Thyroid gland (tissue), 4 donors: ENCODE measurements at regions of chr18 and their contacts with region 1.

Region 1: DNA sequence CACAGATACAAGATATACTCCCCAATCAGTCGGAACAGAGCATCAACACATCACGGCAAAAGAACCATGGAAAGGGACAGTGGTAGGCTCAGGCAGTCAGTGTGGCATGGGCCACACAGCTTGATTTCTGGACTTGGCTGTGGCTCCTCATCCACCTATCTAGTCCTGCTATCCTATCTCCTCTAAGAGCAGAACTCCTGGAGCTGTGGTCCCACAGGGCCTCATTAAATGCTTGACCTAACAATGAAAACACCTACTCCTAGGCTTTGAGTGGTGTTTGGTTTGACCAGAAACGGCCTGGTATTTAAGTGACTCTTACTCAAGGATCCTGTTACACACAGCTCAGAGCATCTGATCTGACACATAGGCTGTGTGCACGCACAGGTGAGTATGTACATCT is 33.6 kb upstream of the SMAD2 start:
- DNase-seq: no peak
- H3K4me3 ChIP-seq: no peak overlapping the region
- H3K27ac ChIP-seq: no peak overlapping the region
- H3K4me1 ChIP-seq: peaks cover 14 to 15% of the 10 kb centered on the region in 2 donors
- H3K27me3 ChIP-seq: no peaks in the 10 kb centered on the region
- CTCF ChIP-seq: no peak
- POLR2A ChIP-seq: no peak

Region 2: GRCh38 chr18:48059455-48060010 is 95.5 kb after region 1 on chr18:
- intact Hi-C with region 1: no loop called
- DNase-seq: peak; percentile 50 to 64
- H3K4me3 ChIP-seq: no peak overlapping the region
- H3K27ac ChIP-seq: peak overlapping the region; percentile 38 to 68 (median 52)
- H3K4me1 ChIP-seq: peaks cover 19 to 30% of the 10 kb centered on the region in 2 donors
- H3K27me3 ChIP-seq: no peaks in the 10 kb centered on the region
- CTCF ChIP-seq: no peak
- POLR2A ChIP-seq: no peak

Region 3: GRCh38 chr18:48129621-48130082 is 165.6 kb after region 1 on chr18:
- intact Hi-C with region 1: loop called (anchors 5 kb)
- DNase-seq: no peak
- H3K4me3 ChIP-seq: no peak overlapping the region
- H3K27ac ChIP-seq: peak overlapping the region in 1 of 3 donors; percentile 12
- H3K4me1 ChIP-seq: peaks cover 13 to 46% of the 10 kb centered on the region in 2 donors
- H3K27me3 ChIP-seq: no peaks in the 10 kb centered on the region
- CTCF ChIP-seq: no peak
- POLR2A ChIP-seq: no peak